A549 (cell line): ENCODE measurements at regions of chr19 and their contacts with region 1.

Region 1: GRCh38 chr19:35945121-35945792 is 9.1 kb downstream of the LRFN3 start:
- DNase-seq: no peak
- ATAC-seq: no peak
- H3K4me3 ChIP-seq: no peak overlapping the region
- H3K27ac ChIP-seq: no peak overlapping the region
- H3K4me1 ChIP-seq: no peaks in the 10 kb centered on the region
- CTCF ChIP-seq: no peak
- EP300 ChIP-seq: no peak
- POLR2A ChIP-seq: no peak
- RAD21 ChIP-seq: no peak

Region 2: DNA sequence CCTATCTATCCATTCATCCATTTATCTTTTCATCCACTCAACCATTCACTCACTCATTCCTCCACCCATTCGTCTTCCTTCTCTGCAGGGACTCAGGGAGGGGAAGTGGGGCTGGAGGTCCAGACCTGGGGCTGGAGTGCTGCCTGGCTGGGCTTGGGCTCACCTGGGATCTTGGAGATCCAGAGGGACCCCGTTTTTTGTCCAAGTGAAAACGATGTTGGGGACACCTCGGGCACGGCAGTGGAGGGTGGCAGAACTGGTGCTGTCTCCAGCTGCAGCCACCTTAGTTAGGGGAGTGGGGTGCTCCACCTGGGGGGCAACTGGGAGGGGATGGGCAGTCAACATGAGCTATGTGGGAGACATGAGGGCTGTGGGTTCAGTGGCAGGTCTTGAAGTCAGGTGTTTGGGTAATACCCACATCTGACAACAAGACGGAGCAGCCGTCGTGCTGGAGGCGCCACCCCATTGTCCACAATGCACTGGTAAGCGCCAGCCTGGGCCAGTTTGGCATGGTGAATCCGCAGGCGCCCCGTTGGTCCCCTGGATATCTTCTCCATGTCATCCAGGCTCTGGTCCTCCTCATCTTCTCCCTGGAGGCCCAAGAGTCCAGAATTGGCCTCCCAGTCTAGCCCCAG is 103.2 kb before region 1 on chr19:
- CTCF ChIA-PET with region 1: no interaction called
- POLR2A ChIA-PET with region 1: no interaction called
- DNase-seq: no peak
- ATAC-seq: no peak
- H3K4me3 ChIP-seq: no peak overlapping the region
- H3K27ac ChIP-seq: no peak overlapping the region
- H3K4me1 ChIP-seq: peaks cover 28% of the 10 kb centered on the region; the same call in 2 of the 3 replicates
- CTCF ChIP-seq: no peak
- EP300 ChIP-seq: no peak
- POLR2A ChIP-seq: no peak
- RAD21 ChIP-seq: no peak

Region 3: GRCh38 chr19:35852029-35852780 is 93.1 kb before region 1 on chr19 and contains the start of gene NPHS1:
- CTCF ChIA-PET with region 1: no interaction called
- POLR2A ChIA-PET with region 1: no interaction called
- DNase-seq: no peak
- ATAC-seq: no peak
- H3K4me3 ChIP-seq: no peak within 1 kb of the TSS
- H3K27ac ChIP-seq: no peak within 1 kb of the TSS
- H3K4me1 ChIP-seq: peaks cover 11% of the 10 kb centered on the region; the same call in 2 of the 3 replicates
- CTCF ChIP-seq: no peak
- EP300 ChIP-seq: no peak
- POLR2A ChIP-seq: no peak
- RAD21 ChIP-seq: no peak
- polyA plus RNA-seq, gene NPHS1: 0.27 and 0.30 TPM in 2 replicates

Region 4: DNA sequence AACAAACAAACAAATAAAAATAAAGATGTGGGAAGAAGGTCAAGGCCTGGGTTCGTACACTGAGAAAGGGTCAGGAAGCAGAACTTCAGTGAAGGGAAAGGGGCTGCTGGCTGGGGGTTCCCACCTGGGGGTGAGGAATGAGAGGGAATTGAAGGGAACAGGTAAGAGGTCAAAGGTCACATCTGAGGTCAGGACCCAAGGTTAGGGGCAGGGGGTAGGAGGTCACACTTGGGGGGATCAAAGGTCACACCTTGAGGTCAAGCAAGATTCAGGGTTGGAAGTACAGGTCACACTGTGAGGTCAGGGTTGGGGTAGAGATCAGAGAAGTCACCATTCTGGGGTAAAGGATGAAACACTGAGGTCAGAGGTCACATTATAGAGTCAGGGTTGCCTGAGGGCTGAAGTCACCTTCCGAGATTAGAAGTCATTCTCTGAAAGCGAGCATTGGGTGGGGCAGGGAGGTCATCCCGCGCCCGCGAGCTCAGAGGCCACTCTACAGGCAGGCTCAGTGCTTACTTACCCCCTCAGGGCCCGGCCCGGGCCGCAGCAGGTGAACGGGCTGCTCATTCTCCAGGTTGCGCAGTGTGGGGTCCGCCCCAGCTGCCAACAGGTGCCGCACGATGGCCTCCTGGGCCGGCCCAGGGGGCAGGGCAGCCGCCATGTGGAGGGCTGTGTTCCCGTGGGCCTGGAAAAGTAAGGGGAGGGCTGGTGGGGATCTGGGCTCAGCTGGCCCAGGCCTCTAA is 55.7 kb before region 1 on chr19:
- CTCF ChIA-PET with region 1: interaction called, 10 read pairs
- POLR2A ChIA-PET with region 1: no interaction called
- DNase-seq: no peak
- ATAC-seq: peak; percentile 13 to 28; a peak in 5 of 6 replicates
- H3K4me3 ChIP-seq: no peak overlapping the region
- H3K27ac ChIP-seq: no peak overlapping the region
- H3K4me1 ChIP-seq: no peaks in the 10 kb centered on the region
- CTCF ChIP-seq: no peak
- EP300 ChIP-seq: no peak
- POLR2A ChIP-seq: no peak
- RAD21 ChIP-seq: no peak

Region 5: DNA sequence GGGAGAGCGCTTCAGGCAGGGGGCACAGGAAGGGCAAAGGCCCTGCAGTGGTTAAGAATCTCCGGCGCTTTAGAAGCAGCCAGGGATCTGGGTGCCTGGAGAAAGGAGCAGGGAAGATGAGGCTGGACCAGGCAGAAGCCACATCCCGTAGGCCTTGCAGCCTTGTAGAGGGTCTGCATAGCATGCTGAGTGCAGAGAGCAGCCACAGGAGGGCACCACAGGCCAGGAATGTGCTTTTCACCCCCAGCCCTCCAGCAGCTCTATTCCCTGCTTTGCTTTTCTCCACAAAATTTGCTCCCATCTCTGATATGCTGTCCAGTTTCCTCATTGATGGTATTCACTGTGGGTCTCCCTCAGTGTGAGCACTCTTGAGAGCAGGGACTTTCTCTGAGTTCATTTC is 115.2 kb after region 1 on chr19:
- CTCF ChIA-PET with region 1: no interaction called
- POLR2A ChIA-PET with region 1: no interaction called
- DNase-seq: peak; percentile 68 to 90
- ATAC-seq: peak; percentile 84 to 90
- H3K4me3 ChIP-seq: no peak overlapping the region
- H3K27ac ChIP-seq: no peak overlapping the region
- H3K4me1 ChIP-seq: peaks cover 15% of the 10 kb centered on the region
- CTCF ChIP-seq: peak; percentile 77
- EP300 ChIP-seq: no peak
- POLR2A ChIP-seq: no peak
- RAD21 ChIP-seq: peak; percentile 80 to 84